Common myeloid progenitor, CD34-positive (primary cell): ENCODE measurements at regions of chr17 and their contacts with region 1.

Region 1: DNA sequence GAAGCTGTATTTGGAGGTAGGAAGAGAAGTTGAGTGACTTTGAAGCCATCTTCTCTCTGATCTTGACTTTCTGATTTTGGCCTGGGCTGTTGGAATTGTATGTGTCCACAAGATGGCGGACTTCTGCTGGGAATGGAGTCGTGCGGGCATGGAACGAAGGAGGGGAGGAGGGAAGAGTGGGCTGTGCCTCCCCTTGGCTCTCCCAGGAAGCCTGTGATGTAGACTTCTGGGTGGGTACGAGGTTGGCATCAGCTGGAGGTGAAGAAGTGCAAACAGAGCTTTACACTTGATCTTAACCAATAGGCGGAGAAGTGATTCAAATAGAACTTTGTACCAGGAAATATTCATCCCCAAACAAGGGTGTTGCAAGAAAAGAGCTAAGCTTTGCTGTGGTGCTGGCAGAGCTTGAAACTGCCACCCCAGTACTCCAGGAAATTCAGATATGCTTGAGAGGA is 7.4 kb upstream of the TMEM220 start:
- DNase-seq: peak; percentile 52 to 68 (median 64)
- H3K4me3 ChIP-seq: no peak overlapping the region
- H3K27ac ChIP-seq: no peak overlapping the region
- H3K4me1 ChIP-seq: peaks cover 0 to 4% (median 0%) of the 10 kb centered on the region in 4 experiments
- H3K27me3 ChIP-seq: no peaks in the 10 kb centered on the region

Region 2: DNA sequence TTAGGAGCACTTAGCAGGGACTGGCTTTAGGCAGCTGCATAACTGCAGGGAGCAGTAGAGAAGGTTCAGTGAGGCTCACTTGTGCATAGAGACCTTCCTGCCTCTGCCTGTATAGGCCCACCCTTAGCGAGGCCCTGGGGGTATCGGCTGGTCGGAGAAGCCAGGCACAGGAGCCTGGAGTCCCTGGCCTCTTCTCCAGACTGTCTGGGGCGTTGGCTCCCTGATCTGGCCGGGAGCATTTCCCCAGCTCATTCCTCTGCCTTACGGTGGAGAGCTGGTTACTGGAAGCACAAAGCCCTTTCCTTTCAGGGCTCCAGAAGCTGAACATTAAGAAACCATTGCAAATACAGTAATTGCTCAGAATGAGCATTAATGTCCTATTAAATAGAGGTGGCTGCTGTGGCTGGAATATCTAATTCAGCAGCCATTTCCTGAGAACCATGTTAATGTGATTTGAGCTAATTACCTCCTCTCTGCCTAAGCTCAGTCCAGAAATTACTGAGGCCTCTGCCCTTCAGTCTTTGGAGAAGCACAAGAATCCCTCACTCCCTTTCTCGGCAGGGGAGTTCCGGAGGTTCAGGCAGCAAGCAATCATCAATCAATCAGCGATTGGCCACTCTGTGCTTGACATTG is 11.5 kb after region 1 on chr17:
- CTCF ChIA-PET with region 1: interaction called, 24 read pairs
- POLR2A ChIA-PET with region 1: no interaction called
- DNase-seq: no peak
- H3K4me3 ChIP-seq: no peak overlapping the region
- H3K27ac ChIP-seq: no peak overlapping the region
- H3K4me1 ChIP-seq: peaks cover 0 to 9% (median 3%) of the 10 kb centered on the region in 4 experiments
- H3K27me3 ChIP-seq: no peaks in the 10 kb centered on the region

Region 3: GRCh38 chr17:10754109-10754508 is 16.9 kb after region 1 on chr17:
- CTCF ChIA-PET with region 1: interaction called, 24 read pairs
- POLR2A ChIA-PET with region 1: no interaction called
- DNase-seq: peak in 2 of 3 donors; percentile 43 to 51
- H3K4me3 ChIP-seq: no peak overlapping the region
- H3K27ac ChIP-seq: no peak overlapping the region
- H3K4me1 ChIP-seq: no peaks in the 10 kb centered on the region
- H3K27me3 ChIP-seq: no peaks in the 10 kb centered on the region

Region 4: GRCh38 chr17:10772425-10773380 is 35.5 kb after region 1 on chr17:
- CTCF ChIA-PET with region 1: interaction called, 10 read pairs
- POLR2A ChIA-PET with region 1: no interaction called
- DNase-seq: peak; percentile 49 to 64 (median 50)
- H3K4me3 ChIP-seq: no peak overlapping the region
- H3K27ac ChIP-seq: no peak overlapping the region
- H3K4me1 ChIP-seq: peaks cover 0 to 5% (median 0%) of the 10 kb centered on the region in 4 experiments
- H3K27me3 ChIP-seq: no peaks in the 10 kb centered on the region

Region 5: DNA sequence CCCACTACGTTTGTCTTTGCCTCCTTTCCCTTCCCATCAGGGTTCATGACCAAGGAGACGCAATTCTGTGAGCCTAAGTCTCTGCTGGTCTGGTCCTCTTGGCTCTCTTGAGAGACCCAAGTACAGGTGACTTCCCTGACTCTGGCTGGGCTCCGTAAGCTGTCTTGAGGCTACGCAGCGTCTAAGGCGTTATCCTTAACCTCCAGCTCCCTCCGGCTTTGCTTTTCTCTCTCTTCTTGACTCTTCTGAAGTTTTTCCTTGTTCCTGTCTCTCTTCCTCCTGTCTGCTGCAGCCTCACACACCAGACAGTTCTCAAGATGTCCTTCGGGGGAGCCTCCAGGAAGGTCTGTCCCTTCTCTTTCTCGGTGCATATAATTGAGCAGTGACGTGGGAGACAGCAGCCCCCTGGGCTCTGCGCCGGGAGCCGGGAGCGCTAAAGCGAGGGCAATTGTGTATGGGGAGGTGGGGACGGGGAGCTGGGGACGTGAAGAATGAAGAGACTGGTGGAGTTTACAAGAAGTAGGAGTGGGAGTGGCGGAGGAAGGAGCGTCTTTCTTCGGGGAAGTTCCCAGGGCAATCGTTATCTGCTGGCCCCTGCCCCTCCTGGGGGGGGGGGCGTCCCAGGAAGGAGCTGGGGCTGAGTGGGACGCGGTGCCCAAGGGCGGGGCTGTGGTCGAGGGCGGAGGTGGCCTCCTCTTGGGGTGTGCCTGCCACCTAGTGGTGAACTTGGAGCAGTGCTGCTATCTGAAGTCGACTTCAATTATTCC is 107.6 kb after region 1 on chr17:
- CTCF ChIA-PET with region 1: interaction called, 36 read pairs
- POLR2A ChIA-PET with region 1: interaction called, 5 read pairs
- DNase-seq: peak; percentile 74 to 80 (median 79)
- H3K4me3 ChIP-seq: peak overlapping the region; percentile 33 to 84 (median 63)
- H3K27ac ChIP-seq: no peak overlapping the region
- H3K4me1 ChIP-seq: peaks cover 0 to 7% (median 3%) of the 10 kb centered on the region in 4 experiments
- H3K27me3 ChIP-seq: peaks cover 0 to 1% (median 0%) of the 10 kb centered on the region in 5 experiments